Activated CD4-positive, alpha-beta memory T cell treated with anti-CD3 and anti-CD28 coated beads for 36 hours (primary cell): ENCODE measurements at regions of chr22 and their contacts with region 1.

Region 1: GRCh38 chr22:22855617-22856308 is 31.9 kb upstream of the IGLL5 start:
- DNase-seq: peak; percentile 56
- H3K4me3 Mint-ChIP-seq: no peak overlapping the region
- H3K27ac Mint-ChIP-seq: no peak overlapping the region
- H3K4me1 Mint-ChIP-seq: no peaks in the 10 kb centered on the region
- H3K27me3 Mint-ChIP-seq: no peaks in the 10 kb centered on the region

Region 2: GRCh38 chr22:22824340-22825212 is 31.2 kb before region 1 on chr22:
- CTCF ChIA-PET with region 1: interaction called, 3 read pairs
- POLR2A ChIA-PET with region 1: no interaction called
- intact Hi-C with region 1: loop called (anchors 1 kb)
- DNase-seq: no peak
- H3K4me3 Mint-ChIP-seq: no peak overlapping the region
- H3K27ac Mint-ChIP-seq: no peak overlapping the region
- H3K4me1 Mint-ChIP-seq: peaks cover 61% of the 10 kb centered on the region
- H3K27me3 Mint-ChIP-seq: no peaks in the 10 kb centered on the region